GM10248 (cell line): ENCODE measurements at regions of chr3 and their contacts with region 1.

Region 1: GRCh38 chr3:100360757-100361496 is 26.4 kb downstream of the NIT2 start:
- DNase-seq: no peak
- CTCF ChIP-seq: no peak

Region 2: GRCh38 chr3:100333970-100334487 is 26.9 kb before region 1 on chr3:
- CTCF ChIA-PET with region 1: interaction called, 13 read pairs
- POLR2A ChIA-PET with region 1: no interaction called
- DNase-seq: no peak
- CTCF ChIP-seq: no peak

Region 3: GRCh38 chr3:100374521-100374920 is 13.6 kb after region 1 on chr3:
- CTCF ChIA-PET with region 1: interaction called, 23 read pairs
- POLR2A ChIA-PET with region 1: no interaction called
- DNase-seq: no peak
- CTCF ChIP-seq: no peak